Stomach (tissue), 19 donors: ENCODE measurements at regions of chr16 and their contacts with region 1.

Region 1: GRCh38 chr16:58018804-58019203 is 6.8 kb upstream of the MMP15 start:
- DNase-seq: no peak
- H3K4me3 ChIP-seq: no peak overlapping the region
- H3K27ac ChIP-seq: no peak overlapping the region
- H3K4me1 ChIP-seq: peaks cover 20 to 35% (median 29%) of the 10 kb centered on the region in 4 donors
- H3K27me3 ChIP-seq: no peaks in the 10 kb centered on the region
- CTCF ChIP-seq: no peak
- EP300 ChIP-seq: no peak
- POLR2A ChIP-seq: no peak

Region 2: DNA sequence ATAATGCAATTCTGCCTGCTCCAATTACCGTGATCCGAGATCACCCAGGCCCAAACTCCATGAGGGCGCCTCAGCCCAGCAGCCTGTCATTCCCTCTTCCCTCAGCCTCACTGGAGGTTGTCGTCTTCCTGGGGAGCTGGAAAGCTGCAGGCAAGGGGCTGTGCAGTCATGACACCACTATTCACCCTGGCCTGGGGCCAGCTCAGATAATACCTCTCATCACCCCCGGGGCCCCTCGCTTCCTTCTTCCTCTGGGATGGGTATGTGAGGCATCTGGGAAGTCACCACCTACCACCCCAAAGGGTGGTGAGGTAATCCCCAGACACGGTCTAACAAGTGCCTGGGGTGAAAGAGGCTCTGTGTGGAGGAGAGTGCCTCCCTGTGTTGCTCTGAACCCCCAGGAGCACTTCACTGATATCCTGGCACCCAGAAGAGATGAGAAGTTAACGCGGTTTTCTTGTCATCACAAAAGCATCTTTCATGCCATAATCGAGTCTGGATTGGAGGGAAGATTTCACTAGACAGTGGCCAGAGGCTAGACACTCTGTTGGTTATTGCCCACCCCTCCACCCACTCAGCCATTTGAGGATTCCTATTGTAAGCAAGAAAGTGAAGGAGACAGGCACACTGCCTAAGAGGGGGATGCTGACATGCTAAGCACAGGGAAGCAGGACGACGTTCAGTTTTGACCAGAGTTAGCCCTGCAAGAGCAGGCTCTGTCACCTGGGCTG is 91.9 kb after region 1 on chr16:
- intact Hi-C with region 1: loop called (anchors 5 kb)
- DNase-seq: peak in 1 of 2 donors; percentile 23
- H3K4me3 ChIP-seq: no peak overlapping the region
- H3K27ac ChIP-seq: no peak overlapping the region
- H3K4me1 ChIP-seq: no peaks in the 10 kb centered on the region
- H3K27me3 ChIP-seq: no peaks in the 10 kb centered on the region
- CTCF ChIP-seq: no peak
- EP300 ChIP-seq: no peak
- POLR2A ChIP-seq: no peak